ENCODE measurements at regions of chr5 and their contacts with region 1.

Region 1: GRCh38 chr5:83473346-83474163 is 2.0 kb downstream of the VCAN start:
- DNase-seq: peak; percentile 76
- H3K4me3 Mint-ChIP-seq: peak overlapping the region; percentile 76
- H3K27ac Mint-ChIP-seq: no peak overlapping the region
- H3K4me1 Mint-ChIP-seq: peaks cover 36% of the 10 kb centered on the region
- H3K27me3 Mint-ChIP-seq: peaks cover 79% of the 10 kb centered on the region

Region 2: GRCh38 chr5:82205005-82205404 is 1268.5 kb before region 1 on chr5:
- CTCF ChIA-PET with region 1: no interaction called
- intact Hi-C with region 1: no loop called
- DNase-seq: no peak
- H3K4me3 Mint-ChIP-seq: no peak overlapping the region
- H3K27ac Mint-ChIP-seq: no peak overlapping the region
- H3K4me1 Mint-ChIP-seq: no peaks in the 10 kb centered on the region
- H3K27me3 Mint-ChIP-seq: no peaks in the 10 kb centered on the region

Region 3: DNA sequence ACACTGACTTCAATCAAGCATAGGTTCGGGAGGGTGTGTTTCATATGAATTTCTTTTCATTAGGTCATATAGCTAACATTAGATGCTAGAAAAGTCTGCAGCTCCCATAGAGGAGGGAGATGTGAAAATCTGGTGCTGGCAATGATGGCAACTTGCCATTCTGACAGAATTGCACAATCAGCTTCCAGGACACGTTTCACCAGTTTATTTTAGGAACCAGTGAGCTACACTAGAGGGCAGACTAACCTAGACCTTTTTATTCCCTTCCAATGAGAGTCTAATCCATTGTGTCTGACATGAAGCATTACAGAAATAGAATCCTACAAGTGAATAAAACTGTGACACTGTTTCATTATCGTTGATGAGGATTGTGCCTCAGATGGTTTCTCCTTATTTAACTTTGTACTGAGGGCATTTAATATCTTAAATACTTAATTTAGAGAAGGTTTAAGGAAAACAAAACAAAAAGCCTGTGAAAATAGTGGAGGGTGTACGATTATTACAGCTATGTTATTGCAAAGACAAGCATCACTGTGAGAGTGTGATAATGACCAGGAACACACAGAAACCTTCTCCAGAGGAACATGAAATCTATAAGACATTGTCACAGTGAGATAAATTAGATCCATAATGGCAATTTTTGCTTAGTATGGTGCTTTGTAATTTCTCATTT is 832.1 kb before region 1 on chr5:
- CTCF ChIA-PET with region 1: no interaction called
- intact Hi-C with region 1: loop called (anchors 1 kb)
- DNase-seq: peak; percentile 34
- H3K4me3 Mint-ChIP-seq: no peak overlapping the region
- H3K27ac Mint-ChIP-seq: no peak overlapping the region
- H3K4me1 Mint-ChIP-seq: no peaks in the 10 kb centered on the region
- H3K27me3 Mint-ChIP-seq: no peaks in the 10 kb centered on the region

Region 4: DNA sequence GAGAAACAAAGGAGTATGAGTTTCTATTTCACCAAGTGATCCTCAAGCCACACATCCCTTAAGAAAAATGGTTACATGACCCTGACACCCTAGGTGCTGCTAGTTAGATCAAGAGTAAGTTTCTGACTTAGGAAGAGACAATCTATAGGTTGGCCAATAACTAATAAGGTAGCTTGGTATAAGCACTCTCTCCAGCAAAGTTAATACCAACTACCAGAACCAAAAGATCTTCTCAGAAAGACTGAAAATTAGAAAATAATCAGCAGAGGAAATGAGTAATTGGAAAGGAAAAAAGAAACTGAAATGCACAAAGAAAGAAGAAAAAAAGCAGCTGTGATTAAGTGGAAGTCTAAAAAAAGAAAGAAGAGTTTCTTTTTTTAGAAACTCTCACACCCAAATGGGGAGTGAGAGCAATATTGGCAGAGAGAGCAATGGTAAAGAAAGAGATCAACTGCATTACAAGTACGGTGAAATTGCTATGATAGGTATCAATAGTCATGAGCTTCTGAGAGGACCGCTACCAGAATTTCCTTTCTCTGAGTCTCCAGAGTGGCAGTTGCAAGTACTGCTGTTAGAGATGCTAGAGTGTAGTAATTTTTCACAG is 591.9 kb before region 1 on chr5:
- CTCF ChIA-PET with region 1: no interaction called
- intact Hi-C with region 1: loop called (anchors 5 kb)
- DNase-seq: no peak
- H3K4me3 Mint-ChIP-seq: no peak overlapping the region
- H3K27ac Mint-ChIP-seq: peak overlapping the region; percentile 6
- H3K4me1 Mint-ChIP-seq: peaks cover 24% of the 10 kb centered on the region
- H3K27me3 Mint-ChIP-seq: peaks cover 8% of the 10 kb centered on the region

Region 5: DNA sequence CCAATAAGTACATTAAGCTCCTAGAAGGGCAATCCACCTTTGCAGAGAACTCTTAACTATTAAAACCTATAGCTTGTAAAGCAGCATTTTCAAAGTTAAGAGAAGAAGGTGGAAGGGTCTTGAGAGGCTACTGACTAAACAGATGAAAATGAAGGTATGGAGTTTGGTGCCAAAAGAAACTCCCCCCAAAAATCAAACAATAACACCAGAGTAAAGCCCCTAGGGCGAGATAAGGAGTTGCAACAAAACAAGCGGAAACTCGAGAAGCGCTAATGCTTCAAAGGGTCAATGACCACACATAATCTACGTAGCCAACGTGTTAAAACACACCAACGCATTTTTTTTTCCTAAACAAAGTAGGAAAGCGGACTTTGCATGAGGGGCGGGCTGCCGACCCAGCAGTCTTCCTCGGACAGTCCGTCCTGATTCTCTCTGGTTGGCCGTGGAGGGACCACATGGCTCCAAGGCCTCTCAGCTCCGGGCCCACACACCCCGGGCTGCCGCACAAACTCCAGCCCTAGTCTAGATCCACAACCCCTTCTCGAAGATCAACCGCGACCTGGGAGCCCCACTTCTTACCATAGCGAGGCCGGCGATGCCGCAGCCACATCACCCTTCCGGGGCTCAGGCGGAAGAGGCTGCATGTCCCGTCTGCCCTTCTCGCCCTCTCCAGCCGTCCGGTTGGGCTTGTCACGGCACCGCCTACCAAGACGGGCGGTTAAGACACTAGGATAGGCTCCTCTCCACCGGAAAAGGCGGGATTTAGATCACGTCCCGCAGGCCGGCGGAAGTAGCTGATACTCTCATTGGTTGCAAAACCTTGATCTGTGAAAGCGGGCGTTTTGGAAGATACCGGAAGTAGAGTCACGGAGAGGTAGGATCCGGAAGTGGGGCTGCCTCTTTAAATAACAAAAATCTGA is 396.6 kb before region 1 on chr5 and contains the starts of genes TMEM167A and XRCC4:
- CTCF ChIA-PET with region 1: no interaction called
- intact Hi-C with region 1: loop called (anchors 2 kb)
- DNase-seq: peak; percentile 95
- H3K4me3 Mint-ChIP-seq: peak within 1 kb of the TSS; percentile 98
- H3K27ac Mint-ChIP-seq: peak within 1 kb of the TSS; percentile 96
- H3K4me1 Mint-ChIP-seq: peaks cover 48% of the 10 kb centered on the region
- H3K27me3 Mint-ChIP-seq: no peaks in the 10 kb centered on the region
- total RNA-seq, gene TMEM167A: 58.8 to 64.4 TPM
- total RNA-seq, gene XRCC4: 12.1 to 12.8 TPM

Region 6: DNA sequence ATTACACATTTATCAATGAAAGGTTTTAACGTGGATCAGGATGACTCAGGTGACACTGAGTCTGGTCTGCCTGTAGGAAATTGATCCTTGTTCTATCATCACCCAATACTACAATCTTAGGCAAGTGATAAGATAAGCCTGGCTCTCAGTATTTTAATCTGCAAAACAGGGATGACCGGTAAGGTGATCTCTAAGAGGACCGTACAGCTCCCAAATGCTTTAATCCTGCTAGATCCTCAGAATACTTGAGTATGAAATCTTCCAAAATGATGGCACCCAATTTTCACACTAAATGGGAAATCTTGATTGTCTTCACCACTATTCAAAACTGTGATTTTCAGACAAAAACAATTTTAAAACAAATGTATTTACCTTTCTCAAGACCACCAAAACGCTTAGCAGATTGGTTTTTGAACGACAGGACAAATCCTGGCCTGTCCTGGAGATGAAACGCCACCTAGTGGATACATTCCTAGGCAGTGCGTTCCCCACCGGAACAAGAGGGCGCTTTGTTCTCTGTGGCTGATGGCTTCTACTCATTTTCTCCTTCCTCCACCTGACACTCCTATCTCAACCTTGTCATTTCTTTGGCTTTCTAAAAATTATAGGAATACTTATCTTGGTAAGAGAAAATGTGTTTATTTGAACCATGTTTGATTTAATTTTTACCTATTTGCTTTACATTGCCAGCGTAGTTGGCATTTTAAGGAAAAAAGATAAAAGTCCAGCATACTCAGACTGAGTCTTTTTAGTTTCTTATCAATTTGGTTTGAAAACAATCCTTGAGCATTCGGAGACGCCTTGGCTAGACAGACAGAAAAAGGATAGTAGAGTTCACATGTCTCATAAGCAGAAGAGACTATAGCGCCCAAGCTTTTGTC is 43.2 kb before region 1 on chr5:
- CTCF ChIA-PET with region 1: no interaction called
- intact Hi-C with region 1: loop called (anchors 1 kb)
- DNase-seq: peak; percentile 76
- H3K4me3 Mint-ChIP-seq: no peak overlapping the region
- H3K27ac Mint-ChIP-seq: no peak overlapping the region
- H3K4me1 Mint-ChIP-seq: no peaks in the 10 kb centered on the region
- H3K27me3 Mint-ChIP-seq: no peaks in the 10 kb centered on the region

Measured in activated naive CD4-positive, alpha-beta T cell treated with anti-CD3 and anti-CD28 coated beads for 36 hours (primary cell).